ENCODE measurements at regions of chr22 and their contacts with region 1.

Region 1: DNA sequence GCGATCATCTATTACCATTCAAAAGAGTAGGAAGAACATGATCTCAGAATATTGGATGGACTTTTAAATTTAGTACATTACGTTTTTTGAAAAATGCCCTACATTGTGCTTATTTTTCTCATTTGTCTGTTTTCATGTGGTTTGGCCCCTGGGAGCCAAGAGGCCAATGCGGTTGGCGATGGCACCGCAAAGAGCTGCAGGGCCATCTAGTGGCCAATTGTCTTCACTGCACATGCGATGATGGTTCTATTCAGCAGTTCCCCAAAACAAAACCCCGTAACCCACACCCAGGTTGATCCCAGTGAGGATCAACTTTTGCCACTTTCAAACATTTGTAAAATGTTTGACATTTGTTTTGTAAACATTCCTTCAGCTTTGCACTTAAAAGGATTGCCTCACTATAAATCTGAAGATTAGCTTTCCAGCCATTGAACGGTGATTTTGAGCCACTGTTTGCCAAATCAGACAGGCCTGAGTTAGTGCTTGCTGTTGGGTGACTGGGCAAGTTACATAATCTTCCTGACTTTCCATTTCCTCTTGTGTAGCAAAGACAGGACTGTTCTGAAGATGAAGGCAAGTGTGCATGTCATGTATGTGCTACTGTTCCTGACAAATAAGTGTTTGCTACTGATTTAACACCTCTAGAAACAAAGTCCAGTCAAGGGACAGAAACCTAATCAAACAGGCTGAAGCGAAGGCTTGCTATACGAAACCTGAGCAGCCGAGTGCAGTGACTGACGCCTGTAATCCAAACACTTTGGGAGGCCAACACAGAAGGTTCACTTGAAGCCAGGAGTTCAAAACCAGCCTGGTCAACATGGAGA is 29.2 kb upstream of the XBP1 start:
- DNase-seq: peak; percentile 84
- H3K4me3 Mint-ChIP-seq: no peak overlapping the region
- H3K27ac Mint-ChIP-seq: no peak overlapping the region
- H3K4me1 Mint-ChIP-seq: peaks cover 17% of the 10 kb centered on the region
- H3K27me3 Mint-ChIP-seq: no peaks in the 10 kb centered on the region

Region 2: DNA sequence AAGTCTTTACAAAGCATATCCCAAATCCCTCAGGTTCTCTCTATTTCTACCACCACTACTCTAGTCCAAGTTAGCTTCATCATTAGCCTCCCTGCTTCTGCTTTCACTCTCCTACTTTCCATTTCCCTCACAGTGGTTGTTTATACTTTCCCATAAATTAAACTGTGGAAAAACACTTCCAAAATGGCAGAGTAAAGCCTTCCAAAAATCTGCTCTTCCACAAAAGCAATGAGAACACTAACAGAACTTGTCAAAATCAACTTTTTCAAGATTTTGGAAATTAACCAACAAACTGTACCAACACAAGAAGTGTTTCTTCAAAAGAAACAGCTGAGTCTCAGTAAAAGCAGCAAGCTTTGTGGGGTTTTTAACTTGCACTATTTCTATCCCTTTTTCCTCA is 221.8 kb before region 1 on chr22:
- CTCF ChIA-PET with region 1: interaction called, 12 read pairs
- POLR2A ChIA-PET with region 1: no interaction called
- intact Hi-C with region 1: no loop called
- DNase-seq: no peak
- H3K4me3 Mint-ChIP-seq: no peak overlapping the region
- H3K27ac Mint-ChIP-seq: no peak overlapping the region
- H3K4me1 Mint-ChIP-seq: no peaks in the 10 kb centered on the region
- H3K27me3 Mint-ChIP-seq: peaks cover 40% of the 10 kb centered on the region

Region 3: GRCh38 chr22:28791841-28792490 is 37.6 kb before region 1 on chr22:
- CTCF ChIA-PET with region 1: interaction called, 55 read pairs
- POLR2A ChIA-PET with region 1: interaction called, 3 read pairs
- intact Hi-C with region 1: loop called (anchors 2 kb)
- DNase-seq: no peak
- H3K4me3 Mint-ChIP-seq: no peak overlapping the region
- H3K27ac Mint-ChIP-seq: peak overlapping the region; percentile 1
- H3K4me1 Mint-ChIP-seq: peaks cover 50% of the 10 kb centered on the region
- H3K27me3 Mint-ChIP-seq: no peaks in the 10 kb centered on the region

Region 4: DNA sequence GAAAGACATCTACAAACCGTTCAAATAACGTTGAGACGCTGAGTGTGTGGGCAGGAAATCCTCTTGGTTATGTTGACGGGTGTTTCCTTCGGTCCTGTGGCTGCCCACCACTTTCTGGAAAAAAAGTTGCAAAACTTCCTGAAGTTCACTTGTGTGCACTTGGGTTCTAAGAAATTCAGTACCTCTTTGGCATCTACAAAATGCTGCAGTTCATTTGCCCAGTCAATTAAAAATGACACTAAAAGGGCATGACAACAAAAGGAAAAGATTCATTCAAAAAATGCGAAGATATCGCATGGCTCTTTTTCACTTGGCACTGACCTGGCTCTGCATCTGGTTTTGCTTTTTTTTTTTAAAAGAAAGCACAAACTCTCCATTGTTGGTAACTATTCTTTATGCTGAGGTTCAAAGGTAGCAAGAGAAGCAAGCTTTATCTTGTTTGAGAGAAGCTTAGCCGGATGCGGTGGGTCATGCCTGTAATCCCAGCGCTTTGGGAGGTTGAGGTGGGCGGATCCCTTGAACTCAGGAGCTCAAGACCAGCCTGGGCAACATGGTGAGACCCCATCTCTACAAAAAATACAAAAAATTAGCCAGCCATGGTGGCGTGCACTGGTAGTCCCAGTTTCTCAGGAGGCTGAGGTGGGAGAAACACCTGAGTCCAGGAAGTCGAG is 18.6 kb before region 1 on chr22:
- CTCF ChIA-PET with region 1: interaction called, 14 read pairs
- POLR2A ChIA-PET with region 1: no interaction called
- intact Hi-C with region 1: no loop called
- DNase-seq: peak; percentile 60
- H3K4me3 Mint-ChIP-seq: peak overlapping the region; percentile 64
- H3K27ac Mint-ChIP-seq: peak overlapping the region; percentile 84
- H3K4me1 Mint-ChIP-seq: peaks cover 65% of the 10 kb centered on the region
- H3K27me3 Mint-ChIP-seq: no peaks in the 10 kb centered on the region

Region 5: GRCh38 chr22:29040385-29041275 is 211.1 kb after region 1 on chr22:
- CTCF ChIA-PET with region 1: interaction called, 10 read pairs
- POLR2A ChIA-PET with region 1: no interaction called
- intact Hi-C with region 1: no loop called
- DNase-seq: peak; percentile 65
- H3K4me3 Mint-ChIP-seq: no peak overlapping the region
- H3K27ac Mint-ChIP-seq: no peak overlapping the region
- H3K4me1 Mint-ChIP-seq: no peaks in the 10 kb centered on the region
- H3K27me3 Mint-ChIP-seq: peaks cover 1% of the 10 kb centered on the region